ENCODE measurements at regions of chr15 and their contacts with region 1.

Region 1: DNA sequence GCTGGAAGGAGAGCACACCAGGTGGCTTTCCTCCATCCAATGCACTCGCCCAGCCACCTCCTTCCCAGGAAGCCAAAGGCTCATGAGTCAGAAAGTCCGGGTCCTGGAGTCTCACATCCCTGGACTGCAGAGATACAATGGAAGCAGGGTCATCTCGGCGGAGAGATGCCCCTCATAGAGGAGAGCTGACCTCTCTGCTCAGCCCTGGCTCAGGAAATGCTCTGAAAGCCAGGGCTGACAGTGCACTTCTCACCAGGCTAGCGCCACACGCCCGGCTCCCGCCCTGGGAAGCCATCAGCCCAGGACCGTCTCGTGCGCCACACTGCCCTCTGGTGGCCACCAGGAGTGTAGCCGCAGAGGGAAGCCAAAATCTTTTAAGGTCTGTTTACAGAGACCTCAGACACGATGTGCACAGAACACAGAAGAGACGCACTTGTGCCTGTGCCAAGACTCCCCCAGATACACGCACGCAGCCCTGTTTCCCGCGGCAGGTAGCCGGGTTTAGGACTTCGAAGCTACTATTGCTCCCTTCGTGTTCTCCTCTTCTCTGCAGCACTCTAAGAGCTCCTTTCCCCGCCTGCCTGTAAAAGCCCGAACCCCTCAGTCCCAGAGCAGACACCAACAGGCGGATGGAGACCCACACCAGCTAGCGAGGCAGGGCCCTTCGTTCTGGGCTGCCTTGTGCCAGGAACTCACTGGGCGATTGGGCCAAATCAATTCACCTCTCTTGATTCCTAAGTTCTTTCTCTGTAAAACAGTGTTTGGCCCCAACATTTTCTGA is 9.7 kb downstream of the NTRK3 start:
- DNase-seq: no peak
- H3K4me3 ChIP-seq: no peak overlapping the region
- H3K27me3 ChIP-seq: no peaks in the 10 kb centered on the region
- CTCF ChIP-seq: peak; percentile 94

Region 2: GRCh38 chr15:87672309-87673288 is 574.3 kb before region 1 on chr15:
- CTCF ChIA-PET with region 1: interaction called, 10 read pairs
- POLR2A ChIA-PET with region 1: no interaction called
- DNase-seq: no peak
- H3K4me3 ChIP-seq: no peak overlapping the region
- H3K27me3 ChIP-seq: no peaks in the 10 kb centered on the region
- CTCF ChIP-seq: peak; percentile 82

Region 3: GRCh38 chr15:88234711-88235110 is 12.1 kb before region 1 on chr15:
- CTCF ChIA-PET with region 1: interaction called, 25 read pairs
- POLR2A ChIA-PET with region 1: no interaction called
- DNase-seq: no peak
- H3K4me3 ChIP-seq: no peak overlapping the region
- H3K27me3 ChIP-seq: no peaks in the 10 kb centered on the region
- CTCF ChIP-seq: no peak

Region 4: GRCh38 chr15:88269356-88270062 is 22.7 kb after region 1 on chr15:
- CTCF ChIA-PET with region 1: interaction called, 30 read pairs
- POLR2A ChIA-PET with region 1: no interaction called
- DNase-seq: no peak
- H3K4me3 ChIP-seq: no peak overlapping the region
- H3K27me3 ChIP-seq: no peaks in the 10 kb centered on the region; the same call in 1 of the 2 replicates
- CTCF ChIP-seq: no peak

Region 5: GRCh38 chr15:88454867-88455810 is 208.3 kb after region 1 on chr15:
- CTCF ChIA-PET with region 1: interaction called, 110 read pairs
- POLR2A ChIA-PET with region 1: no interaction called
- DNase-seq: no peak
- H3K4me3 ChIP-seq: no peak overlapping the region
- H3K27me3 ChIP-seq: no peaks in the 10 kb centered on the region
- CTCF ChIP-seq: peak; percentile 88

Measured in BJ (cell line).